Heart left ventricle (tissue), 16 donors: ENCODE measurements at regions of chr17 and their contacts with region 1.

Region 1: GRCh38 chr17:50547035-50547735 is at the start of gene SPATA20:
- DNase-seq: peak; percentile 91 to 96 (median 94)
- ATAC-seq: peak; percentile 86 to 91 (median 88)
- H3K4me3 ChIP-seq: peak within 1 kb of the TSS; percentile 34 to 87 (median 64)
- H3K27ac ChIP-seq: peak within 1 kb of the TSS in 11 of 12 donors; percentile 74 to 94 (median 85)
- H3K4me1 ChIP-seq: peaks cover 0 to 39% (median 22%) of the 10 kb centered on the region in 12 donors
- H3K27me3 ChIP-seq: peaks cover 0 to 2% (median 0%) of the 10 kb centered on the region in 9 donors
- CTCF ChIP-seq: peak; percentile 92 to 100 (median 97)
- POLR2A ChIP-seq: peak in 1 of 2 donors; percentile 89
- total RNA-seq, gene SPATA20: 21.6 to 83.0 (median 67.1) TPM

Region 2: GRCh38 chr17:49873466-49873865 is 673.7 kb before region 1 on chr17:
- intact Hi-C with region 1: no loop called
- DNase-seq: no peak
- ATAC-seq: no peak
- H3K4me3 ChIP-seq: no peak overlapping the region
- H3K27ac ChIP-seq: no peak overlapping the region
- H3K4me1 ChIP-seq: no peaks in the 10 kb centered on the region
- H3K27me3 ChIP-seq: peaks cover 0 to 38% (median 7%) of the 10 kb centered on the region in 9 donors
- CTCF ChIP-seq: no peak
- POLR2A ChIP-seq: no peak

Region 3: DNA sequence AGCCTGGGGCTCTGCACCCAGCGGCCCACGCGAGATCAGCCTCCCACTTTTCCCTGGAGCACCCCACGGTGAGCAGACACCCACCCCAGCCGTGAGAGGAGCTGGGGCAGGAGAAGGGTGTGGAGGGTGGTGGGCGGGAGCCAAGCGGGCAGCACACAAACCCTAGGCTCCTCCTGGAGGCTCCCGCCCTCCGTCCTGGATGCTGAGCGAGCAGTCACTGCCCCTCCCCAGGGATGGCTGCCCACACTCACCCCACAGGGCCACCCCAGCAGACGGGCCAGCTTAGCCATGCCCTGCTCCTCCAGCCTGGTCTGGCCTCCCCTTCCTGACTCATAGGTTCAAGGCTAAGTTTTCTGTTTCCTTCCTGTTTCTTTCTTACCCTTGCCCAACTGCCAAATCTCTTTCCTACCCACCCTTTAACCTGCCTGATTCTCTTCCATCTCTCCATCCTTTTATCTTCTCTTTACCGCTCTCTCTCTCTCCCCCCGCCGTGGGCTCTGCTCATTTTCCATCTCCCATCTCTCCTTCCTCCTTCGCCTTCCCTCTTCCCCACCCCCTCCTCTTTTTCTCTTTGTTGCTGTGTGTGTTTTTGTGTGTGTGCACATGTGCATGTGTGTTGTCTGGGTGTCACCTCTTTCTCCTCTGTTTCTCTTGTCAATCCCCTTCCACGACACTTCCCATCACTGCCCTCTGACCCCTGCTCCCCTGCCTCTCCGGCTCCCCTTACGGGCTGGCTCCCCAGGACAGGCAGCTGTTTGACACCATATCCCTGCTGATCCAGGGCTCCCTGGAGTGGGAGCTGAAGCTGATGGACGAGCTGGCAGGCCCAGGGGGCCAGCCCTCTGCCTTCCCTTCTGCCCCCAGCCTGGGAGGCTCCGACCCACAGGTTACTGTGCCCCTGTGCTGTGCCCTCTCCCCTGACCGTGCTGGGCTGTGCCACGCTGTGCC is 72.0 kb after region 1 on chr17:
- intact Hi-C with region 1: loop called in 4 of 10 experiments (anchors 2 to 5 kb)
- DNase-seq: no peak
- ATAC-seq: peak in 1 of 4 donors; percentile 11
- H3K4me3 ChIP-seq: no peak overlapping the region
- H3K27ac ChIP-seq: no peak overlapping the region
- H3K4me1 ChIP-seq: peaks cover 0 to 9% (median 0%) of the 10 kb centered on the region in 12 donors
- H3K27me3 ChIP-seq: peaks cover 0 to 4% (median 0%) of the 10 kb centered on the region in 9 donors
- CTCF ChIP-seq: no peak
- POLR2A ChIP-seq: no peak

Region 4: DNA sequence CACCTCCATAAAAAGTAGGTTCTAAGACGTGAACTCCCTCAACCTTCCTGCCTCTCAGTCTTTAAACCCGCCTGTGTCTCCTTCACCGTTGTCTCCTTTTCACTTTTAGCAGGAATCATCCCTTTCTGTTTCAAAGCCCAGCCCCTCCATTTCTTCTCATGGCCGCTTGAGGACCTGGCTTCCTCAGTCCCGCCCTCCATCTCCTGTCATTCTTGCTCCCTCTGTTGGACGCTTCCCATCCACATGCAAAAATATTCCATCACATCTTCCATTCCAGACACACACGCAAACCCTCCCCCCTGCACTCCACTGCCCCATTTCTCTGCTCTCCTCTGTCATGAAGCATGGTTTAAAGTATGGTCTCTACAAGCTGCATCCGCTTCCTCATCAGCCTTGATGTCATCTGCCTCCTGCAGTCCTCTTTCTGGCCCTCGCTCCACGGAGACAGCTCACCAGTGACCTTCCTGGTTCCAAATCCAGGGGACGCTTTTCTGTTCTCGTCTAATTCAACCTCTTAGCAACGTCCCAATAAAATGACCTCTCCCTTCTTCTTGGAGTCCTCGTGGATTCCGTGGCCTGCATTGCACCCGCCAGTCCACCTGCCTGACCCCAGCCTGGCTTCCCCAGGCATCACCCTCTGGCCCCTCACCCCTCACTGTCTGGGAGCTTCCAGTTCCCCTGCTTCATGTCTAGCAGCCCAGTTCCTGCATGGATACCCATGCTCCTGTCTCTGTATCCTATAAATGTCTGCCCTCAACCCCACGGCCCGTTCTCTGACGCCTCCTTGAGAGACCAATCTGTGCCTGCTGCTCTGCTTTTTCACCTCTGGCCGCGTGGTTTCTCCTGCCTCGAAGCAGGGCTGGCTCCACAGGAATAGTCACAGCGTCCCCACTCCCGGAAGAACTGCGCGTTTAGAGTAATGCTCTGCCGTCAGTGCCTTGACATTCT is 134.4 kb after region 1 on chr17:
- intact Hi-C with region 1: loop called in 9 of 10 experiments (anchors 1 to 5 kb)
- DNase-seq: peak in 3 of 5 donors; percentile 43 to 54 (median 51)
- ATAC-seq: peak; percentile 29 to 72 (median 66)
- H3K4me3 ChIP-seq: peak overlapping the region in 3 of 12 donors; percentile 0 to 19 (median 17)
- H3K27ac ChIP-seq: peak overlapping the region in 1 of 12 donors; percentile 66
- H3K4me1 ChIP-seq: peaks cover 0 to 9% (median 5%) of the 10 kb centered on the region in 12 donors
- H3K27me3 ChIP-seq: no peaks in the 10 kb centered on the region
- CTCF ChIP-seq: peak; percentile 32 to 65 (median 47)
- POLR2A ChIP-seq: no peak

Region 5: GRCh38 chr17:50707289-50708049 is 160.3 kb after region 1 on chr17 and contains the start of gene ANKRD40:
- intact Hi-C with region 1: loop called in 1 of 10 experiments (anchors 5 kb)
- DNase-seq: peak; percentile 91 to 94 (median 91)
- ATAC-seq: peak; percentile 80 to 92 (median 88)
- H3K4me3 ChIP-seq: peak within 1 kb of the TSS; percentile 50 to 81 (median 74)
- H3K27ac ChIP-seq: peak within 1 kb of the TSS; percentile 94 to 100 (median 97)
- H3K4me1 ChIP-seq: peaks cover 0 to 60% (median 41%) of the 10 kb centered on the region in 12 donors
- H3K27me3 ChIP-seq: no peaks in the 10 kb centered on the region
- CTCF ChIP-seq: no peak
- POLR2A ChIP-seq: peak; percentile 9 to 59
- total RNA-seq, gene ANKRD40: 38.8 to 55.4 (median 47.2) TPM

Region 6: DNA sequence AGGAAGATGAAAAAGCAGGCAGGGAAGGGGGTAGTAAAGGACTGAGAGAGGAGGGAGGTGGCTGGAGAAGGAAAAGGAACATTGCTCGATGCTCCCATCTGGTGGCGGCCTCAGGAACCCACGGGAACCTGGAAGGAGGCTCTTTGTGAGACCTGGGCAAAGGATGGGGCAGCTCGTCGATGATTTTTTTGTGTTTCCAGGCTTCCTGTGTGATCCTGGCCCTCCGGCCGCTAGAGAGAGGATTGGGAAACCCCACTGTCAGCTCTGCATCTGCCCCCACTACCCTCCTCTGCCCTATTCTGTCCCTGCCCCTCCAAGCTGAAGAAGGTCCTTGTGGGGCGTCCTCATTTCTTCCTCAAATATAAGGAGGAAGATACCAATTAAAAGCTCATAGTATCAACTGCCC is 294.8 kb after region 1 on chr17:
- intact Hi-C with region 1: loop called in 8 of 10 experiments (anchors 2 to 10 kb)
- DNase-seq: peak; percentile 49 to 81 (median 60)
- ATAC-seq: peak in 3 of 4 donors; percentile 47 to 73 (median 57)
- H3K4me3 ChIP-seq: no peak overlapping the region
- H3K27ac ChIP-seq: no peak overlapping the region
- H3K4me1 ChIP-seq: peaks cover 0 to 20% (median 6%) of the 10 kb centered on the region in 12 donors
- H3K27me3 ChIP-seq: no peaks in the 10 kb centered on the region
- CTCF ChIP-seq: peak; percentile 55 to 87 (median 79)
- POLR2A ChIP-seq: no peak

Region 7: GRCh38 chr17:50967795-50968194 is 420.6 kb after region 1 on chr17:
- intact Hi-C with region 1: loop called in 1 of 10 experiments (anchors 10 kb)
- DNase-seq: no peak
- ATAC-seq: no peak
- H3K4me3 ChIP-seq: no peak overlapping the region
- H3K27ac ChIP-seq: peak overlapping the region in 6 of 12 donors; percentile 1 to 43 (median 9)
- H3K4me1 ChIP-seq: peaks cover 0 to 16% (median 0%) of the 10 kb centered on the region in 12 donors
- H3K27me3 ChIP-seq: no peaks in the 10 kb centered on the region
- CTCF ChIP-seq: no peak
- POLR2A ChIP-seq: no peak